ENCODE measurements at regions of chr12 and their contacts with region 1.

Region 1: GRCh38 chr12:54549774-54550451 is 512 bp downstream of the PDE1B start:
- DNase-seq: peak; percentile 75
- ATAC-seq: peak; percentile 91
- H3K4me3 Mint-ChIP-seq: peak overlapping the region; percentile 81
- H3K27ac Mint-ChIP-seq: peak overlapping the region; percentile 83
- H3K4me1 Mint-ChIP-seq: peaks cover 37% of the 10 kb centered on the region
- H3K27me3 Mint-ChIP-seq: peaks cover 6% of the 10 kb centered on the region

Region 2: DNA sequence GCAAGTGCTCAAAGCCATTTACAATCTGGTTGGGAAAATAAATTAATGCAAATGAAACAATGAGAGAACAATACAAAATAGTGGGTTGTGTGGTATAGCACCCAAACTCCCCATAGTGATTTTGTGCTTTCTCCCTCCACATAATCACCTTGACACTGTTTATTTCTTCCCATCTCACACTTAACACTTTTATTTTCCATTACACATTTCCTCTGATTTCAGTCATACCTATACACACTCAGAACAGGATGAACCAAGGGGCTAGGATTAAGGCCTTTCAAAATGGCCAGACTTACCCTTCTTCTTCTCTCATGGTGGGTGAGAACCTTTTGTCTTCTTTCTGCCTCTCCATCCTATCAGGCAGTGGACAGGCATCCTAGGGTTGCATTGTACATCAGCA is 14.4 kb before region 1 on chr12:
- CTCF ChIA-PET with region 1: interaction called, 4 read pairs
- POLR2A ChIA-PET with region 1: no interaction called
- intact Hi-C with region 1: loop called in 1 of 2 experiments (anchors 2 kb)
- DNase-seq: no peak
- ATAC-seq: peak; percentile 84
- H3K4me3 Mint-ChIP-seq: no peak overlapping the region
- H3K27ac Mint-ChIP-seq: peak overlapping the region; percentile 66
- H3K4me1 Mint-ChIP-seq: peaks cover 39% of the 10 kb centered on the region
- H3K27me3 Mint-ChIP-seq: no peaks in the 10 kb centered on the region

Region 3: DNA sequence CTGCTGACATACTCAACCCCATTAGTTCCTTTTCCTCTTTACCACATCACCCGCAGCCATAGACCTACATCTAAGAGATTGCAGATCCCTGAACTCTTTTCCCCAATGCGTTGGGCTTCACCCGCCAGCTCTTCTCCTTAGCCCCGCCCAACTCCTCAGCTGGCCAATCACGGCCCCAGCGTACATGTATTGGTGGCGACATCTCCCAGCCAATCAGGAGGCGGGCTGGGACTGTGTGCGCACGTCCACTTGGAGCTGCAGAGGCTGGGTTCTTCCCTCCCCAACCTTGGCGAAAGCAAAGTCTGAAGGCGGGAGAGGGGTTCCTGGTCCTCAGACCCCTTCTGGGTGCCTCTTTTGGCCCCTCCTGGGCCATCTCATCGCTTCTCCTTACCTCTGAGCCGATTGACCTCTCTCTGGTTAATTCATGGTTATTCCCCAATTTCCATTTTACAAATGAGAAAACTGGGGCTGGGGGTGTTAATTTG is 10.5 kb after region 1 on chr12:
- CTCF ChIA-PET with region 1: interaction called, 11 read pairs
- POLR2A ChIA-PET with region 1: interaction called, 7 read pairs
- intact Hi-C with region 1: loop called in 1 of 2 experiments (anchors 1 kb)
- DNase-seq: peak; percentile 95
- ATAC-seq: peak; percentile 100
- H3K4me3 Mint-ChIP-seq: peak overlapping the region; percentile 66
- H3K27ac Mint-ChIP-seq: peak overlapping the region; percentile 93
- H3K4me1 Mint-ChIP-seq: peaks cover 33% of the 10 kb centered on the region
- H3K27me3 Mint-ChIP-seq: no peaks in the 10 kb centered on the region

Measured in activated CD4-positive, alpha-beta T cell treated with anti-CD3 and anti-CD28 coated beads for 36 hours (primary cell).